K562 (cell line): ENCODE measurements at regions of chr11 and their contacts with region 1.

Region 1: GRCh38 chr11:82867495-82868082 is 32.6 kb downstream of the PRCP start:
- DNase-seq: peak; percentile 51 to 86 (median 54)
- ATAC-seq: peak; percentile 77
- H3K4me3 ChIP-seq: no peak overlapping the region
- H3K27ac ChIP-seq: no peak overlapping the region
- H3K4me1 ChIP-seq: peaks cover 0 to 2% of the 10 kb centered on the region in 2 experiments; a peak in 2 of 5 replicates
- H3K27me3 ChIP-seq: no peaks in the 10 kb centered on the region
- CTCF ChIP-seq: peak; percentile 57 to 85 (median 61)
- EP300 ChIP-seq: no peak
- POLR2A ChIP-seq: no peak
- RAD21 ChIP-seq: peak; percentile 86 to 89

Region 2: GRCh38 chr11:82521427-82521826 is 346.2 kb before region 1 on chr11:
- CTCF ChIA-PET with region 1: no interaction called
- POLR2A ChIA-PET with region 1: no interaction called
- in situ Hi-C with region 1: no loop called
- intact Hi-C with region 1: no loop called
- DNase-seq: no peak
- ATAC-seq: no peak
- H3K4me3 ChIP-seq: no peak overlapping the region
- H3K27ac ChIP-seq: no peak overlapping the region
- H3K4me1 ChIP-seq: no peaks in the 10 kb centered on the region
- H3K27me3 ChIP-seq: no peaks in the 10 kb centered on the region
- CTCF ChIP-seq: no peak
- EP300 ChIP-seq: no peak
- POLR2A ChIP-seq: no peak
- RAD21 ChIP-seq: no peak

Region 3: GRCh38 chr11:82718307-82718706 is 149.3 kb before region 1 on chr11:
- CTCF ChIA-PET with region 1: interaction called, 16 read pairs
- POLR2A ChIA-PET with region 1: interaction called, 3 read pairs
- in situ Hi-C with region 1: loop called (anchors 5 kb)
- intact Hi-C with region 1: loop called (anchors 1 kb)
- DNase-seq: peak; percentile 37 to 59 (median 48)
- ATAC-seq: peak; percentile 86
- H3K4me3 ChIP-seq: no peak overlapping the region
- H3K27ac ChIP-seq: no peak overlapping the region
- H3K4me1 ChIP-seq: no peaks in the 10 kb centered on the region
- H3K27me3 ChIP-seq: peaks cover 5 to 14% of the 10 kb centered on the region in 2 experiments
- CTCF ChIP-seq: peak; percentile 73 to 91 (median 79)
- EP300 ChIP-seq: no peak
- POLR2A ChIP-seq: no peak
- RAD21 ChIP-seq: peak; percentile 90

Region 4: DNA sequence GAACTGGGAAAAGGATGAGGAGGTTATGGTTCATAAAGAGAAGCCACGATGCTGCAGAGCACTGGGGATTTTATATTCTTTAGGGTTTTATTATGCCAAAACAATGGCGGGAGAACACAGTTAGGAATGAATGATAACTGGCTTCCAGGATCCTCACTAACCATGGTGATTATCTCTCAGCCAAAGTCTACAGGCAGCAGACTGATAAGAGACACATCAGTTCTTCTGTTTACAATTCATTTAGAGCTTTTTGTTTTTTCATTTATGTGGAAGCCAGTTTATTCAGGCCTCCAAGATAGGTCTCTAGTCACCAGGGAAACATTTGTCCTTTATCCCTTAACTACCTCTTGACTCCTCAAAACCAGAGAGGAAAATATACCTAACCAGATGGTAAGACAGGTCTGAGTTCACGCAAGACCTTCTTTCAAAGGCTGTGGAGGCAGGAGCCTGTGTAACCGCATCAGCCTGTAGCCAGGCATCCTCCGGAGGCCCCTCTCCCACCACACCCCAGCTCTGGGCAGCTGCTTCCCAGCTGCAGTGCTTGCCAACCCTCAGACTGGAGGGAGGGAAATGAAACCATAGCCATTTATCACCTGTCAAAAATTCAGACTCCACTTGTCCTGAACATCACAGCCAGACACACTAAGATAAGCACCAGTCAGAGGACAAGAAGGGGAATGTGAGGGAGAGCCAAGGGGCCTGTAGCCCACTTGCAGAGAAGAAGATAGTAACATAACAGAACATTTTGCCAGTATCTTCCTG is 76.7 kb before region 1 on chr11:
- CTCF ChIA-PET with region 1: no interaction called
- POLR2A ChIA-PET with region 1: no interaction called
- in situ Hi-C with region 1: no loop called
- intact Hi-C with region 1: loop called (anchors 5 kb)
- DNase-seq: peak; percentile 26 to 77 (median 46)
- ATAC-seq: peak; percentile 56
- H3K4me3 ChIP-seq: no peak overlapping the region
- H3K27ac ChIP-seq: peak overlapping the region; percentile 36
- H3K4me1 ChIP-seq: peaks cover 26 to 43% of the 10 kb centered on the region in 2 experiments
- H3K27me3 ChIP-seq: no peaks in the 10 kb centered on the region
- CTCF ChIP-seq: no peak
- EP300 ChIP-seq: peak; percentile 84
- POLR2A ChIP-seq: no peak
- RAD21 ChIP-seq: no peak

Region 5: GRCh38 chr11:82927254-82927880 is 59.8 kb after region 1 on chr11:
- CTCF ChIA-PET with region 1: no interaction called
- POLR2A ChIA-PET with region 1: no interaction called
- in situ Hi-C with region 1: no loop called
- intact Hi-C with region 1: loop called (anchors 2 kb)
- DNase-seq: peak; percentile 47 to 62 (median 51)
- ATAC-seq: peak; percentile 88
- H3K4me3 ChIP-seq: no peak overlapping the region
- H3K27ac ChIP-seq: no peak overlapping the region
- H3K4me1 ChIP-seq: peaks cover 0 to 6% of the 10 kb centered on the region in 2 experiments; a peak in 2 of 5 replicates
- H3K27me3 ChIP-seq: no peaks in the 10 kb centered on the region
- CTCF ChIP-seq: peak; percentile 71 to 80 (median 73)
- EP300 ChIP-seq: no peak
- POLR2A ChIP-seq: no peak
- RAD21 ChIP-seq: peak; percentile 48 to 81; a peak in 3 of 4 replicates

Region 6: DNA sequence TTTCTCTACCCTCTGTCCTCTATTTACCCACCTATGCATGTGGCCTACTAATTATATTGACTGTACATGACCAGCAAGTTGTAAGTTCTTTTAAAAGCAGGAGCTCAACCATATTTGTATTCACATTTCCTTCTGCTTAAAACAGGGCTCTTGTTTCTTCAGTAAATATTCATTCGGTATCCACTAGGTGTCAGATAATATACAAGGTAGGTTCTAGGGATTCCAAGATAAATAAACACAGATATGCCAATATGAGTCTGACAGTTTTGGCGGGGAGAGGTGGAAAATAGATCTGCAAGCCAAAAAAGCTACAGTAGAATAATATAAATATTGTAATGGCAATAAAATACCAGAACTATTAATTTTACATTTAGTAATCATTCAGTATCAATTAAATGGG is 219.4 kb after region 1 on chr11:
- CTCF ChIA-PET with region 1: no interaction called
- POLR2A ChIA-PET with region 1: no interaction called
- in situ Hi-C with region 1: no loop called
- intact Hi-C with region 1: loop called (anchors 5 kb)
- DNase-seq: no peak
- ATAC-seq: peak; percentile 56; the same call in 2 of the 3 replicates
- H3K4me3 ChIP-seq: no peak overlapping the region
- H3K27ac ChIP-seq: no peak overlapping the region
- H3K4me1 ChIP-seq: peaks cover 6 to 9% of the 10 kb centered on the region in 2 experiments; a peak in 3 of 5 replicates
- H3K27me3 ChIP-seq: no peaks in the 10 kb centered on the region
- CTCF ChIP-seq: peak; percentile 6 to 45 (median 13); a peak in 2 of 6 replicates
- EP300 ChIP-seq: no peak
- POLR2A ChIP-seq: no peak
- RAD21 ChIP-seq: peak; percentile 31 to 54; a peak in 3 of 4 replicates